ENCODE measurements at regions of chr3 and their contacts with region 1.

Region 1: DNA sequence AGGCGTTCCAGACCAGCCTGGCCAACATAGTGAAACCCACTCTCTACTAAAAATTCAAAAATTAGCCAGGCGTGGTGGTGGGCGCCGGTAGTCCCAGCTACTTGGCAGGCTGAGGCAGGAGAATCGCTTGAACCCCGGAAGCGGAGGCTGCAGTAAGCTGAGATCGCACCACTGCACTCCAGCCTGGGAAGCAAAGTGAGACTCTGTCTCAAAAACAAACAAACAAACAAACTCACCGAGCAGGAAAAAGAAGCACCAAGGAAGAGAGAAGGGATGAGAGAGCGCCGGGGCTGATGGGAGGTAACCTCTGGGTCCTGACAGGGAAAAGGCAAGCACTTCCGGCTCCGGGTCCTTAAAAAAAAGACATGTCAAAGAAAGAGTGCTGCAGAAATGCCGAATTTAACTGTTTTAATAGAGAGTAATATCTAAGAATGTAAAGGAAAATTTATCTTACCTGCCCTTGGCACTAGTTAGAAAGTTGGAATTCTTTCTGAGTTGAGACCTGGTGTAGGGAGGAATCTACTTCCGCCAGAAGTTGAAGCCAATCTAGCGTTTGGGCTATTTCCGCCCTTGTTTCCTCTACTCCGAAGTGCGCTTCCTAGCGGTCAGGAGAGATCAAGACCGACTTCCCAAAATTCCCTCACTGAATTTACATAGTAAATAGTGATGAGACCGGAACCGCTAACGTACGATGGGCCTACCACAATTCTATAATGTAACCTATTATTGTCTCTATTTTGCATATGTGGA is 29.1 kb downstream of the EFCAB12 start:
- DNase-seq: peak; percentile 50
- ATAC-seq: peak; percentile 80
- H3K4me3 Mint-ChIP-seq: peak overlapping the region; percentile 96
- H3K27ac Mint-ChIP-seq: peak overlapping the region; percentile 96
- H3K4me1 Mint-ChIP-seq: peaks cover 40% of the 10 kb centered on the region
- H3K27me3 Mint-ChIP-seq: no peaks in the 10 kb centered on the region
- CTCF ChIP-seq: peak; percentile 36

Region 2: DNA sequence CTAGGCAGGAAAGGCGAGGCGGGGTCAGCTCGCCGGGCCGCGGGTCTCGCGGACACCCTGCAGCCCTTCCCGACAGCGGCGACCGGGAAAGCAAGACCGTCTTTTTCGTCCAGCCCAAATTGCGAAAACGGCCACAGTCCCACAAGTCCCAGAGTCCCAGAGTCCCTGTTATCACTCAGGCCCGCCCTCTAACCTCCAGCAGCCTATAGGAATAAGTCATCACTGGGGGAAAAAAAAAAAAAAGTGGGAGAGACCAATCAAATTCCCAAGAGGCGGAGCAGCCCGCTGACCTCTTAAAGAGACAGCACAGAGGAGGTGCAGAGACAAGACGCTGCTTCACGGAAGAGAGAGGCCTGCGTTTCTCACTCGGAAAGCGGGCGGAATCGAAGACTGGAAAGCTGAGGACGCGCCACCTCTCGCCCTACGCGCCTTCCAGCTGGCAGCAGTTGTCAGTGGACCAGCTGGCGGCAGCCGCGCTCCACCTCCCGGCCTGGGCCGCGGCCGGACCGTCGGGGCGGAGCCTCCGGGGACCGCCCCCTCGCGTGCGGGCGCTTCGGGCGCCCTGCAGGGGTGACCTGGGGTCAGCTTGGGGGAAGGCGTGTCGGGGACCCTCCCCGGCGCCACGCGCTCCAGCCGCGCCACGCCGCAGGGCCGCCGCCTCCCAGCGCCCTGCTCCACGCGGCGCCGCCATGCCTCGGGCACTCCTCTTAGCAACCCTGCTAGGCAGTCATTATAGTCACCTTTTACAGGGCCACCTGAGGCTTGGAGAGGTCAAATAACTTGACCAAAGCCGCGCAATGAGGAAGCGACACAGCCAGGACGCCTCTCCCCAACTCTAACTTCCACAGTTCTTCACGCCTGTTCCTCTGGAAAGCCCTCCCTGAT is 1808.5 kb before region 1 on chr3 and contains the start of gene TPRA1:
- CTCF ChIA-PET with region 1: no interaction called
- POLR2A ChIA-PET with region 1: no interaction called
- intact Hi-C with region 1: loop called (anchors 10 kb)
- DNase-seq: peak; percentile 79
- ATAC-seq: peak; percentile 82
- H3K4me3 Mint-ChIP-seq: peak within 1 kb of the TSS; percentile 90
- H3K27ac Mint-ChIP-seq: peak within 1 kb of the TSS; percentile 85
- H3K4me1 Mint-ChIP-seq: peaks cover 28% of the 10 kb centered on the region
- H3K27me3 Mint-ChIP-seq: no peaks in the 10 kb centered on the region
- CTCF ChIP-seq: no peak
- total RNA-seq, gene TPRA1: 17.5 and 18.3 TPM in 2 replicates

Region 3: DNA sequence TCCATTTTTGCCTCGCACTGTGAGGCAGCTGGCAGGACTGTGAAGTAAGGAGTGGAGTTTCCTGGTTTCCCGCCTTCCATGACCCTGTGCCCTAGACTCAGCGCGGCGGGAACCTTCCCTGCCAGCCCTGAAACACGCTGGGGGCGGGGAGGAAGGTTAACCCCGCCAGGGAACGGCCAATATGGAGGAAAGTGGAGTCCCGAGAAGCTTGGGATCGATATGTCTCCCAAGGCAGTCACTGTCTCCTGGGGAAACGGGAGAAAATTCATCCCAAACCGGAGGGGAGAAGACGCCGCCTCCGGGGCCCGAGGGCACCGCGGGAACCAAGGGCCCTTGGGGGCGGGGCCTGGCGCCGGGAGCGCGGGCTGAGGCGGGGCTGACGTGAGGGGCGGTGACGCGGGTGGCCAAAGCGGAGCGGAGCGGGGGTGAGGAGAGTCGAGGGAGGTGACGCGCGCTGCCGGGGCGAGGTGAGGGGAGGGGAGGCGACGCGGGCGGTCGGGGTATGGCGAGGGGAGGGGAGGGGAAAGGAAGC is 120.8 kb before region 1 on chr3 and contains the start of gene HMCES:
- CTCF ChIA-PET with region 1: no interaction called
- POLR2A ChIA-PET with region 1: interaction called, 6 read pairs
- intact Hi-C with region 1: loop called (anchors 1 kb)
- DNase-seq: peak; percentile 91
- ATAC-seq: peak; percentile 62
- H3K4me3 Mint-ChIP-seq: peak within 1 kb of the TSS; percentile 91
- H3K27ac Mint-ChIP-seq: peak within 1 kb of the TSS; percentile 86
- H3K4me1 Mint-ChIP-seq: peaks cover 80% of the 10 kb centered on the region
- H3K27me3 Mint-ChIP-seq: no peaks in the 10 kb centered on the region
- CTCF ChIP-seq: no peak
- total RNA-seq, gene HMCES: 31.7 and 37.2 TPM in 2 replicates

Region 4: GRCh38 chr3:129418041-129418973 is 19.0 kb after region 1 on chr3:
- CTCF ChIA-PET with region 1: interaction called, 4 read pairs
- POLR2A ChIA-PET with region 1: interaction called, 14 read pairs
- intact Hi-C with region 1: no loop called
- DNase-seq: no peak
- ATAC-seq: no peak
- H3K4me3 Mint-ChIP-seq: no peak overlapping the region
- H3K27ac Mint-ChIP-seq: no peak overlapping the region
- H3K4me1 Mint-ChIP-seq: peaks cover 7% of the 10 kb centered on the region
- H3K27me3 Mint-ChIP-seq: no peaks in the 10 kb centered on the region
- CTCF ChIP-seq: no peak

Region 5: DNA sequence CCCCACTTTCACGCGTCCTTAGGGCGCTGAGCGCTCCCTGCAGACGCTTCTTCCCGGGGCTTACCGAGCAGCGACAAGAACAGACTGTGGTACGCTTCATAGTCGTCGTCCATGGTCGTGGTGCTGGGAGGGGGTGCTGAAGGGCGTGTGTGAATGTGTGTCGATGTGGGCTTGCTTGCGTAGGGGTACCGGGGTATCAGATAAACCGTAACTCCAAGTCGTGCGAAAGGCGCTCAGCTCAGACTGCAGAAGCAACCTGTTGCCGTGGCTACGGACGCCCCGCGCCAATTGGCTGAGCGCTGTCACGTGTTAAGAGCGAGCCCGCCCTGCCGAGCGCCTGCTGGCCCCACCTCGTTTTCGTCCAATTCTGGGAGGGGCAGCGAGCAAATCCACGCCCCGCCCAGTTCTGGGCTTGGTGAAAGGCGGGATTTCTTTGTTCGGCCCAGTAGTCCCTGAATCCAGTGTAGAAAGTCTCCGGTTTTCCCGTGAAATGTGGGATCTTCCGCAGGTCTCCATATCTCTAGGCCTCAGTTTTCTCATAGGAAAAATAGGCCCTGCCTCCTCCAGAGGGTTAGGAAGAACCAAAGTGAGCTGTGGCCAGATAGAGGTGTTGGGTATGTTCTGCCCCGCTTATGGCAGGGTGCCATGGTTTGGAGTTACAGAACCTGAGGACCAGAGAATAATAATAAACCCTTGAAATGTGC is 29.2 kb after region 1 on chr3 and contains the start of gene EFCAB12:
- CTCF ChIA-PET with region 1: interaction called, 3 read pairs
- POLR2A ChIA-PET with region 1: interaction called, 7 read pairs
- intact Hi-C with region 1: loop called (anchors 1 kb)
- DNase-seq: peak; percentile 83
- ATAC-seq: peak; percentile 91
- H3K4me3 Mint-ChIP-seq: peak within 1 kb of the TSS; percentile 85
- H3K27ac Mint-ChIP-seq: peak within 1 kb of the TSS; percentile 83
- H3K4me1 Mint-ChIP-seq: peaks cover 64% of the 10 kb centered on the region
- H3K27me3 Mint-ChIP-seq: no peaks in the 10 kb centered on the region
- CTCF ChIP-seq: no peak
- total RNA-seq, gene EFCAB12: 1.8 and 2.1 TPM in 2 replicates

Region 6: GRCh38 chr3:129481766-129482332 is 82.5 kb after region 1 on chr3:
- CTCF ChIA-PET with region 1: no interaction called
- POLR2A ChIA-PET with region 1: no interaction called
- intact Hi-C with region 1: no loop called
- DNase-seq: no peak
- ATAC-seq: no peak
- H3K4me3 Mint-ChIP-seq: no peak overlapping the region
- H3K27ac Mint-ChIP-seq: no peak overlapping the region
- H3K4me1 Mint-ChIP-seq: no peaks in the 10 kb centered on the region
- H3K27me3 Mint-ChIP-seq: no peaks in the 10 kb centered on the region
- CTCF ChIP-seq: no peak

Region 7: DNA sequence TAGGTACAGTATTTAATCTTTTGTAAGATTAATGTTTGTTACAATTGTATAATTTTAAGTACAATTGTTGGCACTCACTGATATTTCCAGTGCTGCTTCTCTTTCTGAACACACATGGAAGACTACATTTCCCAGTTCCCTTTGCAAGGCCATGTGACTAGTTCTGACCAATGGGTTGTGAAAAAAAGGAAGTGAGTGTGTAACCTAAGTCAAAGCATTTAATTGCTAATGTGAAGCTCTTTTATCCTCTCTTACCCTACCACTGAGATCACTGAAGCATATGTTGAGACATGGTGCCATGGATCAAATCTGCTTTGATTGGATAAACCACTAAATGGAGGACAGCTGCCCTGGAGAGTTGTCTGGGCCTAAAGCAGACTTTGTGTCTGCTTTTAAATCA is 291.1 kb after region 1 on chr3:
- CTCF ChIA-PET with region 1: no interaction called
- POLR2A ChIA-PET with region 1: no interaction called
- intact Hi-C with region 1: no loop called
- DNase-seq: no peak
- ATAC-seq: peak; percentile 100
- H3K4me3 Mint-ChIP-seq: no peak overlapping the region
- H3K27ac Mint-ChIP-seq: no peak overlapping the region
- H3K4me1 Mint-ChIP-seq: peaks cover 4% of the 10 kb centered on the region
- H3K27me3 Mint-ChIP-seq: no peaks in the 10 kb centered on the region
- CTCF ChIP-seq: no peak

Region 8: DNA sequence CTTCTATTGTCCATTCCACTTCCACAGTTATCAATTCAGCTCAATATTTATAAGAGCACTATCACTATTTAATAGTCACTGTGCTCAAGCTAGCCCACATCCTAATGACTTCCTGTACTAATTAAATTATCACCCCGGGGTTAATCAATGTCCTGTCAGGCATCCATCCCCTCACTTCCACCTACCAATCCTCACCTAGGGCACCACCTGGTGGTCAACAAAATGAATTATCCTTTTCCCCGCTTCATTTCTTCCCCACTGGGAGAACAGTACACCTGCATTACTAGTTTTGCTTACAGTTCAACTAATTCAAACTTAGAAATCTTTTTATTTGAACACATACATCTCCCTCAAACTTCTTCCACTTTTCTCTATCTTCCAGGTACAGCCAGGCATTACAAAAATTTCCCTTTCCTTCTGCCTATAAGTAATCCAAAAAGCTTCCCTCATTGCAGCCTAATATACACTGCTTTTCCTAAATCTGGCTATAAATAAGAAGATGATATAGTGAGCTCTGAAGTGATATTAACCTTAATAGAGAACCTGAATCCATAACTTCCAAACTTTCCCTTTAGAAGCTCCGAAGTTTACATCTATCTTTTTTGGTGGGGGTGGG is 425.7 kb after region 1 on chr3:
- CTCF ChIA-PET with region 1: interaction called, 4 read pairs
- POLR2A ChIA-PET with region 1: no interaction called
- intact Hi-C with region 1: loop called (anchors 5 kb)
- DNase-seq: no peak
- ATAC-seq: peak; percentile 23
- H3K4me3 Mint-ChIP-seq: no peak overlapping the region
- H3K27ac Mint-ChIP-seq: peak overlapping the region; percentile 2
- H3K4me1 Mint-ChIP-seq: peaks cover 50% of the 10 kb centered on the region
- H3K27me3 Mint-ChIP-seq: no peaks in the 10 kb centered on the region
- CTCF ChIP-seq: peak; percentile 78

Region 9: GRCh38 chr3:129893581-129894070 is 494.3 kb after region 1 on chr3 and contains the start of gene TMCC1:
- CTCF ChIA-PET with region 1: no interaction called
- POLR2A ChIA-PET with region 1: no interaction called
- intact Hi-C with region 1: loop called (anchors 1 kb)
- DNase-seq: peak; percentile 92
- ATAC-seq: peak; percentile 90
- H3K4me3 Mint-ChIP-seq: peak within 1 kb of the TSS; percentile 87
- H3K27ac Mint-ChIP-seq: peak within 1 kb of the TSS; percentile 88
- H3K4me1 Mint-ChIP-seq: peaks cover 34% of the 10 kb centered on the region
- H3K27me3 Mint-ChIP-seq: no peaks in the 10 kb centered on the region
- CTCF ChIP-seq: no peak
- total RNA-seq, gene TMCC1: 25.8 and 25.9 TPM in 2 replicates